ENCODE measurements at regions of chr5 and their contacts with region 1.

Region 1: DNA sequence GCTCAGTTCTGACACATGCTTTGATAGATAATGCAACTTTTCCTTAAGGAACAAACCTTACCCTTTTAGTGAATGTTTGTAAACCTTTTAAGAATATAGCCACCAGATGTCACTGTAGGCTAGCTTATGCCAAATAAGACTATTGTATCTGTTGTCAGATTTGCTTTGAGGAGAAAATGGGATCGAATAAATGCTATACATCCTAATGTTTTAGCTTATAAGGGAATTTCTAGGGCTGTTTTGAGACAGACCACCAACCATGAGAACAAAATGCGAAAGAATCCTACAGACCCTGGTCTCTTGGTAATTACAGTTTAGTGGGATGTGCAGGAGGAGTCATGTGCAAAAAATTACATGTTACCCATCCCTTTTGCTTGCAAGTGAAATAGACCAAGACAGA is 127.6 kb upstream of the NMUR2 start:
- DNase-seq: no peak
- H3K4me3 ChIP-seq: no peak overlapping the region
- H3K27ac ChIP-seq: no peak overlapping the region
- H3K27me3 ChIP-seq: no peaks in the 10 kb centered on the region
- CTCF ChIP-seq: peak; percentile 51

Region 2: GRCh38 chr5:152256580-152256979 is 276.1 kb before region 1 on chr5:
- CTCF ChIA-PET with region 1: no interaction called
- POLR2A ChIA-PET with region 1: no interaction called
- DNase-seq: no peak
- H3K4me3 ChIP-seq: no peak overlapping the region
- H3K27ac ChIP-seq: no peak overlapping the region
- H3K27me3 ChIP-seq: no peaks in the 10 kb centered on the region
- CTCF ChIP-seq: no peak

Region 3: GRCh38 chr5:152551061-152551460 is 18.3 kb after region 1 on chr5:
- CTCF ChIA-PET with region 1: interaction called, 10 read pairs
- POLR2A ChIA-PET with region 1: no interaction called
- DNase-seq: no peak
- H3K4me3 ChIP-seq: no peak overlapping the region
- H3K27ac ChIP-seq: no peak overlapping the region
- H3K27me3 ChIP-seq: no peaks in the 10 kb centered on the region
- CTCF ChIP-seq: no peak

Region 4: GRCh38 chr5:153959134-153959957 is 1426.6 kb after region 1 on chr5:
- CTCF ChIA-PET with region 1: interaction called, 129 read pairs
- POLR2A ChIA-PET with region 1: no interaction called
- DNase-seq: peak; percentile 21
- H3K4me3 ChIP-seq: no peak overlapping the region
- H3K27ac ChIP-seq: no peak overlapping the region
- H3K27me3 ChIP-seq: peaks cover 3% of the 10 kb centered on the region
- CTCF ChIP-seq: no peak